ENCODE measurements at regions of chr1 and their contacts with region 1.

Region 1: GRCh38 chr1:47388891-47389238 is 27.2 kb upstream of the FOXE3 start:
- DNase-seq: peak; percentile 74
- ATAC-seq: peak; percentile 86
- H3K4me3 ChIP-seq: no peak overlapping the region
- H3K27ac ChIP-seq: no peak overlapping the region
- H3K4me1 ChIP-seq: peaks cover 6% of the 10 kb centered on the region; the same call in 1 of the 2 replicates
- H3K27me3 ChIP-seq: no peaks in the 10 kb centered on the region
- CTCF ChIP-seq: peak; percentile 82

Region 2: GRCh38 chr1:47424336-47424982 is 35.6 kb after region 1 on chr1:
- CTCF ChIA-PET with region 1: no interaction called
- POLR2A ChIA-PET with region 1: no interaction called
- intact Hi-C with region 1: loop called (anchors 1 kb)
- DNase-seq: peak; percentile 82
- ATAC-seq: peak; percentile 90
- H3K4me3 ChIP-seq: no peak overlapping the region
- H3K27ac ChIP-seq: no peak overlapping the region
- H3K4me1 ChIP-seq: no peaks in the 10 kb centered on the region
- H3K27me3 ChIP-seq: no peaks in the 10 kb centered on the region
- CTCF ChIP-seq: peak; percentile 96